A549 (cell line): ENCODE measurements at regions of chr11 and their contacts with region 1.

Region 1: GRCh38 chr11:9534791-9535781 is 38.4 kb upstream of the WEE1 start:
- DNase-seq: peak in 1 of 2 experiments; percentile 71
- ATAC-seq: peak; percentile 64 to 74; a peak in 4 of 6 replicates
- H3K4me3 ChIP-seq: no peak overlapping the region
- H3K27ac ChIP-seq: peak overlapping the region; percentile 19 to 52; a peak in 4 of 6 replicates
- H3K4me1 ChIP-seq: peaks cover 16% of the 10 kb centered on the region
- CTCF ChIP-seq: peak; percentile 85
- EP300 ChIP-seq: no peak
- POLR2A ChIP-seq: no peak
- RAD21 ChIP-seq: peak; percentile 63 to 74

Region 2: DNA sequence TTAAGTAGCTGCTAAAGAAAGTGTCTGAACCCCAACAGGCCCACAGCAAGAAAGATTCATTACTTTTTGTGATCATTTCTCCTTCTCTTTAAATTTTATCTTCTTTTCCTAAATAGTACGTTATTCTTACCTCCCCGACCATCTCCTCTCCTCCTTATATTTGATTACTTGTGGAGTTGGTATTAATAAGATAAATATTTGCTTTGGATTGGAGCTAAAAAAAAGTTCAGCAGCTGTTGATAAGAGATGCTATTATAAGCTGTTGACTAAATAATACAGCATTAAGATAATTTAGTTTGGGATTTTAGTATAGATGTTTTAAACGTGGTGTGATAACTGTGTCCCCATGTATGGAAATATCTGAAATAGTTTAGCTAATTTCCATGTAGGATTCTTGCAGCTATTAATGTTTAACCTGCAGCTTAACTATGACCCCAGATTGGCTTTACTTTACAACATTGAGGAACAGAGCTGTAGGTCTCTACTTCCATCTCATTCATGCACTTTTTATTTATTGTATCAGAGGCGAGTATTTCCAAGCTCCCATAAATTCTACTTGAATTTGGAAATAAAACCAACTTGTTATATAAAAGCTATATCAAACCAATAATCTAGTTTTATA is 36.5 kb before region 1 on chr11:
- CTCF ChIA-PET with region 1: no interaction called
- POLR2A ChIA-PET with region 1: no interaction called
- DNase-seq: no peak
- ATAC-seq: no peak
- H3K4me3 ChIP-seq: no peak overlapping the region
- H3K27ac ChIP-seq: no peak overlapping the region
- H3K4me1 ChIP-seq: peaks cover 12% of the 10 kb centered on the region; the same call in 2 of the 3 replicates
- CTCF ChIP-seq: no peak
- EP300 ChIP-seq: no peak
- POLR2A ChIP-seq: no peak
- RAD21 ChIP-seq: no peak

Region 3: GRCh38 chr11:9550191-9550628 is 15.1 kb after region 1 on chr11:
- CTCF ChIA-PET with region 1: interaction called, 10 read pairs
- POLR2A ChIA-PET with region 1: no interaction called
- DNase-seq: no peak
- ATAC-seq: no peak
- H3K4me3 ChIP-seq: no peak overlapping the region
- H3K27ac ChIP-seq: no peak overlapping the region
- H3K4me1 ChIP-seq: no peaks in the 10 kb centered on the region
- CTCF ChIP-seq: no peak
- EP300 ChIP-seq: no peak
- POLR2A ChIP-seq: no peak
- RAD21 ChIP-seq: no peak

Region 4: DNA sequence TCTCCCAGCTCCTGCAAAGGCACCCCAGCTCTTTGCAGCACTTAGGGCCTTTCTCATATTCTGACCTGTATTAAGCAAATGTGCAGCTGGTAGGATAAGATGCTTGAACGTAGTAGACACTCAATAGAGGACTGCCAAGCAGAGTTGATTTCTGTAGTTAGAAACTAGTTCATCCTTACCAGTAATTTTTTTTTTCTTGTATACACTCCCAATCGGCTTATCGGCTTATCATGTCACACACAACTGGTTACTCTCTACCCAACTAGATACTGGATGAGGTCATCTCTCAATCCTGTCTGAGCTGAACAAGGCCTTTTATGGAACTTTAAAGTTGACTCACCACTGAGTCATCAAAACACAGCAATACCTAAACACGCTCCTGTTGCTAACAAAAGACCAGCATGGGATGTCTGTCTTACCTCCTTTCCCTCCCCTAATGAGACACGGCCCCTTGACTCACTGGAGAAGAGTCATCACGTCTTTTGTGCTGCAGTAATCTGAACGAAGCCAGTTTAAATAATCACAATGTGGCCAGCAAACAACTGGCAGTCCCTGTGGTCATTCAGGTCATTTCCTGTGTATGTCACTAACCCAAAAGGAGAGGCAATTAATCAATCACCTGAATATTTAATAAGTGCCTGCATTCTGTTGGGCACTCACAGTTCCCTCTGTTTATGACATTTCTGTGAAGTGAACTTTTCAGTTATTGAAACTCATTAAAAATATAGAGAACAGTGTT is 30.9 kb after region 1 on chr11:
- CTCF ChIA-PET with region 1: interaction called, 33 read pairs
- POLR2A ChIA-PET with region 1: no interaction called
- DNase-seq: peak; percentile 93 to 99
- ATAC-seq: peak; percentile 91 to 97
- H3K4me3 ChIP-seq: peak overlapping the region; percentile 1; the same call in 1 of the 3 replicates
- H3K27ac ChIP-seq: peak overlapping the region; percentile 78 to 83
- H3K4me1 ChIP-seq: peaks cover 52% of the 10 kb centered on the region
- CTCF ChIP-seq: no peak
- EP300 ChIP-seq: peak; percentile 34 to 35; a peak in 2 of 5 replicates
- POLR2A ChIP-seq: no peak
- RAD21 ChIP-seq: peak in 1 of 2 experiments; percentile 33; a peak in 1 of 5 replicates

Region 5: GRCh38 chr11:9573052-9573774 is 38.1 kb after region 1 on chr11 and contains the start of gene WEE1:
- CTCF ChIA-PET with region 1: interaction called, 9 read pairs
- POLR2A ChIA-PET with region 1: interaction called, 17 read pairs
- DNase-seq: peak; percentile 96 to 99
- ATAC-seq: peak; percentile 82 to 93
- H3K4me3 ChIP-seq: peak within 1 kb of the TSS; percentile 89
- H3K27ac ChIP-seq: peak within 1 kb of the TSS; percentile 95
- H3K4me1 ChIP-seq: peaks cover 53% of the 10 kb centered on the region
- CTCF ChIP-seq: no peak
- EP300 ChIP-seq: no peak
- POLR2A ChIP-seq: peak; percentile 47
- RAD21 ChIP-seq: no peak
- polyA plus RNA-seq, gene WEE1: 32.8 and 41.3 TPM in 2 replicates